CD4-positive, alpha-beta memory T cell (primary cell): ENCODE measurements at regions of chr16 and their contacts with region 1.

Region 1: GRCh38 chr16:3129137-3130131 is 5.4 kb upstream of the ZNF213 start:
- DNase-seq: peak; percentile 89 to 92 (median 90)
- H3K4me3 ChIP-seq: peak overlapping the region; percentile 56 to 64
- H3K4me3 Mint-ChIP-seq: peak overlapping the region; percentile 88 to 95 (median 94)
- H3K27ac ChIP-seq: peak overlapping the region; percentile 46
- H3K27ac Mint-ChIP-seq: peak overlapping the region; percentile 83 to 96 (median 89)
- H3K4me1 ChIP-seq: peaks cover 52% of the 10 kb centered on the region
- H3K4me1 Mint-ChIP-seq: peaks cover 26 to 70% (median 42%) of the 10 kb centered on the region in 4 donors
- H3K27me3 ChIP-seq: no peaks in the 10 kb centered on the region
- H3K27me3 Mint-ChIP-seq: no peaks in the 10 kb centered on the region

Region 2: DNA sequence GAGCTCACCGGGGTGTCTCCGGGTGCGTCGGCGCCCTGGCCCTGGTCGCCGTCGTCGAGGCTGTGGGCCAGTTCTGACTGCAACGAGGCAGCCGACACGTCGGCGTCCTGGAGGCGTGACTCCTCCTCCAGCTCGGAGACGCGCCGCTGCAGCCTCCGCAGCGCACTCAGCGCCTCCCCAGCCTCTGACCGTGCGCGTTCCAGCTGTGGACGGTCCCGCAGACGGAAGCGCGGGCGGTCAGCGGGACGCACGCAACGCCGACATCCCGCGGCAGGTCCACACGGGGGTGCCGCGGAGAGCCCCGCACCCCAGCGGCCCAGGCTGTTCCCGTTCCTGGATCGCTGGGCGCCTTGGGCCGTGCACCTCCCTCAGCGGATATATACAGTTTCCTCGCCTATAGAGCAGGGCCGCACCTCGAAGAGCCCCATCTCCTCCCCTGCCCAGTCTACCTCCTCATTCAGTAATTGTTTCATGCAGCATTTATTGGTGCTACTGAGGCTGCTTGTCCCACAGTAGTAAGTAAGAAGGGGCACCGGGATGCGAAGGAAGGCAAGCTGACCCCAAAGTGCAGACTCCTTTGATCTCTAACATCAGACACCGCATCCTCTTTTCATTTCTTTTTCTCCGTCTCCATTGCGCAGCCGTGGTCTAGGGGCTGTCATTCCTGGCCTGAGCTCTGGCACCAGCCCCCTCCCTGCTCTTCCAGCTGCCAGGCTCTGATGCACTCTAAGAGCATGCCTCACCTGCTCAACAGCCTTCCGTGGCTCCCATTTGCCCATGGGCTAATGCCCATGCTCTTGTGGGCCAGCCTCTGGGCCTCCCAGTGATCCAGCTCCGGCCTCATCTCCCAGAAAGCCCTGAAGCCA is 99.7 kb before region 1 on chr16:
- CTCF ChIA-PET with region 1: interaction called, 277 read pairs
- POLR2A ChIA-PET with region 1: interaction called, 19 read pairs
- intact Hi-C with region 1: loop called (anchors 1 kb)
- DNase-seq: peak in 3 of 5 donors; percentile 36 to 43 (median 37)
- H3K4me3 ChIP-seq: peak overlapping the region in 1 of 2 donors; percentile 41
- H3K4me3 Mint-ChIP-seq: peak overlapping the region; percentile 52 to 88 (median 74)
- H3K27ac ChIP-seq: no peak overlapping the region
- H3K27ac Mint-ChIP-seq: peak overlapping the region in 1 of 7 donors; percentile 81
- H3K4me1 ChIP-seq: peaks cover 25% of the 10 kb centered on the region
- H3K4me1 Mint-ChIP-seq: peaks cover 11 to 32% (median 19%) of the 10 kb centered on the region in 4 donors
- H3K27me3 ChIP-seq: peaks cover 13% of the 10 kb centered on the region
- H3K27me3 Mint-ChIP-seq: peaks cover 22 to 25% of the 10 kb centered on the region in 2 donors

Region 3: GRCh38 chr16:3074860-3075522 is 54.4 kb before region 1 on chr16:
- CTCF ChIA-PET with region 1: interaction called, 67 read pairs
- POLR2A ChIA-PET with region 1: interaction called, 51 read pairs
- intact Hi-C with region 1: no loop called
- DNase-seq: peak; percentile 90 to 96 (median 91)
- H3K4me3 ChIP-seq: peak overlapping the region; percentile 4 to 29
- H3K4me3 Mint-ChIP-seq: peak overlapping the region; percentile 74 to 87 (median 83)
- H3K27ac ChIP-seq: peak overlapping the region; percentile 77
- H3K27ac Mint-ChIP-seq: peak overlapping the region; percentile 91 to 99 (median 97)
- H3K4me1 ChIP-seq: peaks cover 98% of the 10 kb centered on the region
- H3K4me1 Mint-ChIP-seq: peaks cover 69 to 98% (median 85%) of the 10 kb centered on the region in 4 donors
- H3K27me3 ChIP-seq: no peaks in the 10 kb centered on the region
- H3K27me3 Mint-ChIP-seq: no peaks in the 10 kb centered on the region

Region 4: DNA sequence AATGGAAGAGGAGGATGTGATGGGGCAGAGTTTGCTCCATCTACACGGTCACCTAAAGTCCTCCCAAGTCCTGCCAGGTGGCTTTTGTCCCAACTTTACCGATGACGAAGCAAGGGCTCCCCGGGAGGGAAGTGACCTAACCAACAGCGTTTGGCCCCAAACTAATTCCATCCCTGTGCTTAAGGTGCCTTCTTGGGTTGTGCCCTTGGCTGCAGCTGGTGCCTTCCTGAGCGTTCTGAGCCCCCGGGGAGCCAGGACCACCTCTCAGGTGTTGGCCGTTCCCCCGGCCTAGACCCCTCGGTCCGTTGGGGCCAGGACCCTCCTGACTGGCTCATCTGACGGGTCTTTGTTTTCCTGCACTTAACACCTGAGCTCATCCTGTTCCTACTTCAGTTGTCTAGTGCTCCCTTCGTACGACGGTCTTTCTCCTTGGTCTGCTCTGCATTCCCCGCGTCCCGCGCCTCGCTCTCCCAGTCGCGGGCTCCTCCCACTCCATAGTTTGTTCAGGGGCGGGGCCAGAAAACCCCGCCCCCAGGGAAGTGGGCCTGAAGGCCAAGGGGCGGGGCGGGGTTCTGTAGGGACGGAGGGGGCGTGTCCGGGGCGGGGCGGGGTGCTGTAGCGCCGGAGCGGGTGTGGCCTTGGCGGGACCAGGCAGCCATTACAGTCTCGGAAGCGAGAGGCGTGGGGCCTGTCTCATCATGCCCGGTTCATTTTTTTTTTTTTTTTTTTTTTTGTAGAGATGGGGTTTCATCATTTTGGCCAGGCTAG is 29.5 kb before region 1 on chr16:
- CTCF ChIA-PET with region 1: interaction called, 376 read pairs
- POLR2A ChIA-PET with region 1: interaction called, 146 read pairs
- intact Hi-C with region 1: loop called (anchors 1 kb)
- DNase-seq: peak; percentile 80 to 89 (median 82)
- H3K4me3 ChIP-seq: peak overlapping the region; percentile 19 to 23
- H3K4me3 Mint-ChIP-seq: peak overlapping the region; percentile 77 to 90 (median 86)
- H3K27ac ChIP-seq: peak overlapping the region; percentile 33
- H3K27ac Mint-ChIP-seq: peak overlapping the region; percentile 82 to 97 (median 93)
- H3K4me1 ChIP-seq: peaks cover 58% of the 10 kb centered on the region
- H3K4me1 Mint-ChIP-seq: peaks cover 19 to 68% (median 44%) of the 10 kb centered on the region in 4 donors
- H3K27me3 ChIP-seq: no peaks in the 10 kb centered on the region
- H3K27me3 Mint-ChIP-seq: no peaks in the 10 kb centered on the region

Region 5: DNA sequence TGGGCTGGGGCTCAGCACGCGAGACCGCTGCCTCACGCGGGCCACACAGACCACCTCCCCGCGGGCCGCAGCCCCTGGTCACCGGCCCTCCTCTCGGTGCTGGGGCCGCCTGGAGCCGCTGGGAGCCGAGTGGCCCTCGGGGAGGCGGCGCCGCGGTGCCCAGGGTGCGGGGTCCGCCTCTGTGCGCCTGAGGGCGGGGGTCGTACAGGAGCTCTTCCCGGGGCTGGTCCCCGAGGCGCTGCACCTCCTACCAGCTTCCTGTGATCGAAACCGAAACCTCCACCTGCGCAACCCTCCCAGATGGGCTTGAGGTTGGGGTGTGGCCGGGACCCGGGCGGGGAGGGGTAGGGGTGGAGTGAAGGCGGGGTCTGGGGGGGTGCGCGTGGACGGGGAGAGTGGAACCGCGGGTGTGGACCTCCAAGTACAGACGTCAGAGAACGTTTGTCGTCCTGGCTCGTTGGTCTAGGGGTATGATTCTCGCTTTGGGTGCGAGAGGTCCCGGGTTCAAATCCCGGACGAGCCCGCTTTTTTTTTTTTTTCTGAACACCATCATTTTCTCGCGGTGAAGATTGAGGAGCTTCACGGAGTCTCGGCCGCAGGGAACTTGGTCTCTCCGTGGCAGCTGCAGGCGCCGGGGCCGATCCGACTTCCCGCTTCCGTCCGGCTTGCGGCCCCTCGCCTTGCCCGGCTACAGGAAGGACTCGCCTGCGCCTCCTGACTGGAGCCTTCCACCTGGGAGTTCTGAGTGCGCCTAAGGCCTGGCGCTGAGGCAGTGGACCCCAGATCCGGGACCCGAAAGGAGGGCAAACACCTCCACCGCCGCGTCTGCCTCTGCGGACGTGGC is 29.3 kb after region 1 on chr16:
- CTCF ChIA-PET with region 1: interaction called, 36 read pairs
- POLR2A ChIA-PET with region 1: interaction called, 72 read pairs
- intact Hi-C with region 1: loop called (anchors 1 kb)
- DNase-seq: peak; percentile 92 to 98 (median 94)
- H3K4me3 ChIP-seq: peak overlapping the region; percentile 65 to 66
- H3K4me3 Mint-ChIP-seq: peak overlapping the region; percentile 83 to 96 (median 92)
- H3K27ac ChIP-seq: peak overlapping the region; percentile 62
- H3K27ac Mint-ChIP-seq: peak overlapping the region; percentile 92 to 100 (median 96)
- H3K4me1 ChIP-seq: peaks cover 25% of the 10 kb centered on the region
- H3K4me1 Mint-ChIP-seq: peaks cover 11 to 36% (median 25%) of the 10 kb centered on the region in 4 donors
- H3K27me3 ChIP-seq: no peaks in the 10 kb centered on the region
- H3K27me3 Mint-ChIP-seq: peaks cover 0 to 2% of the 10 kb centered on the region in 2 donors

Region 6: DNA sequence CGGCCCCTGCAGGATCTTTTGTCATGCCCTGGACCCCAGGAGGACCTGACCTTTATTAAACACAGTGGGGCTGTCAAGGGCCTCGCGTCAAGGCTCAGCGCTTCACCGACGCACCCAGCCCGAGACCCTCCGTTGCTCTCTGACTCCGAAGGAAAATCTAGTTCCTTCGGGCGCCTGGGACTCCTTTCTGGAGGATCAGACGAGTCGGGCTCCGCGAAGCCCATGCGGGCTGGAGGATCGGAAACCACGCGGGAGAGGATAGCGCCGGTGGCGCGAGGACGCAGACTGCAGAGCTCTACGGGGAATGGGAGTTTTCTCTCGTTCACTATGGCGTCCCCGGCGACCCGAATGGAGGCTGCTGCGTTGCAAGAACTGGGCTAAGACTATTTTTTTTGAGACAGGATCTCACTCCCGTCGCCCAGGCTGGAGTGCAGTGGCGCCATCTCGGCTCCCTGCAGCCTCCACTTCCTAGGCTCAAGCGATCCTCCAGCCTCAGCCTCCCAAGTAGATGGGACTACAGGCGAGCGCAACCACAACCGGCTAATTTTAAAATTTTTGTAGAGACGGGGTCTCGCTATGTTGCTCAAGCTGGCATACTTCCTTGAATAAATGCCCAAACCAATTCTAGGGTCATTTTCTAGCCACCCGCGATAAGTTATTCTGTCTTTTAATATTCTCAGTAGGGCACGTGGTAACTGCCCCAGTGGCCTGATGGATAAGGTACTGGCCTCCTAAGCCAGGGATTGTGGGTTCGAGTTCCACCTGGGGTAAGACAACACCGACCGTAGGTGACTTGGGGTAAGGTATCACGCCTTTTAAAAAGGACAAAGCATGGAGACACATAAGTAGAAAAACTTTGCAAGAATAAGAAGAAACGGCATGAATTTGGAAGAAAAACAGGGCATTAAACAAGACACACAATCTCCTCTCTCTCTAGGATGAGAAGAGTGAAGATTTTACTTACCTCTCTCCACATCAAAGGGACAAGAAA is 64.1 kb after region 1 on chr16:
- CTCF ChIA-PET with region 1: no interaction called
- POLR2A ChIA-PET with region 1: no interaction called
- intact Hi-C with region 1: no loop called
- DNase-seq: no peak
- H3K4me3 ChIP-seq: no peak overlapping the region
- H3K4me3 Mint-ChIP-seq: peak overlapping the region in 1 of 8 donors; percentile 23
- H3K27ac ChIP-seq: no peak overlapping the region
- H3K27ac Mint-ChIP-seq: peak overlapping the region in 1 of 7 donors; percentile 13
- H3K4me1 ChIP-seq: peaks cover 34% of the 10 kb centered on the region
- H3K4me1 Mint-ChIP-seq: peaks cover 7 to 39% (median 22%) of the 10 kb centered on the region in 4 donors
- H3K27me3 ChIP-seq: peaks cover 60% of the 10 kb centered on the region
- H3K27me3 Mint-ChIP-seq: peaks cover 41 to 48% of the 10 kb centered on the region in 2 donors

Region 7: GRCh38 chr16:3364774-3365427 is 235.5 kb after region 1 on chr16:
- CTCF ChIA-PET with region 1: no interaction called
- POLR2A ChIA-PET with region 1: no interaction called
- intact Hi-C with region 1: no loop called
- DNase-seq: peak; percentile 81 to 90 (median 88)
- H3K4me3 ChIP-seq: peak overlapping the region in 1 of 2 donors; percentile 46
- H3K4me3 Mint-ChIP-seq: peak overlapping the region; percentile 78 to 88 (median 84)
- H3K27ac ChIP-seq: peak overlapping the region; percentile 59
- H3K27ac Mint-ChIP-seq: peak overlapping the region; percentile 71 to 95 (median 90)
- H3K4me1 ChIP-seq: peaks cover 5% of the 10 kb centered on the region
- H3K4me1 Mint-ChIP-seq: peaks cover 3 to 20% (median 7%) of the 10 kb centered on the region in 4 donors
- H3K27me3 ChIP-seq: no peaks in the 10 kb centered on the region
- H3K27me3 Mint-ChIP-seq: peaks cover 11 to 19% of the 10 kb centered on the region in 2 donors